ENCODE measurements at regions of chr1 and their contacts with region 1.

Region 1: DNA sequence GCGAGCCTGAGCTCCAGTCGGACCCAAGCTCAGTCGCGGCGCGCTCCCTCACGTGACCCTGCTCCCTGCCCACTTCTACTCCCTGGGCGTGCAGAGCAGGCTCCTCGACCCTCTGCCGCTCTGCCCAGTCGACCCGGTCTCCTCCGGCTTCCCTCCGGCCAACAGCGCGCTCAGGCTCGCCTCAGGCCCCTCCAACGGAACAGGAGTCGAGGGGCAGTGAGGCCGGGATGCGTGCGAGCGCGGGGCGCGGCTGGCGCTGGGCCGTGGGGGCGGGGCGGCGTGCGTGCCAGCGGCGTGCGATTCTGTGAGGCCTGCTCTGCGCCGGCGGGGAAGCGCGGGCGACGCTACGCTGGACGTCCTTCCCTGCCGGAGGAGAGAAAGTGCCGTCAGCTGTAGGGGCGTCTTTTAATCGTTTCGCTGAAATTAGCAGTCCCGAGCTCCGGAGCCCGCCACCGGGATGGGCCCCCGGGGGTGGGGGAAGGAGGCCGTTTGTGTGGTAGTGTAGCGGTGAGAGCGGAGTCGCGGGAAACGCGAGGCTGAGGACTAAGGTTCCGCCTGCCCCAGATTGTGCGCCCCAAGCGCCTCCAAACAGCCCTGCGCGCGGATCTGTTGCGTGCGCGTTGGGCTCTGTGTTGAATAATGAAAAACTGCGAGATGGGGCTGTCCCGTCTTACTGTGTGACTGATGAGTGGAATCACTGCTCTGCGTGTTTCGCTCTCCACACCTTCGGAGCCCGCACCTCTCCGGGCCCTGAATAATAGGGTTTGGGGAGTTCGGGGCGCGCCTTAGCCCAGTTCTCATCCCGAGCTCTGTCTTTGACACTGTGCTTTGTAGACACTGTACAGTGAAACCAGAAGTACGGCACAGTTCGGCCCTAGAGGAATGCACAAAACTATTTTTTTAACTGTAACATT is at the start of gene ACBD6:
- DNase-seq: peak; percentile 89
- H3K4me3 Mint-ChIP-seq: peak within 1 kb of the TSS; percentile 93
- H3K27ac Mint-ChIP-seq: peak within 1 kb of the TSS; percentile 96
- H3K4me1 Mint-ChIP-seq: peaks cover 38% of the 10 kb centered on the region
- H3K27me3 Mint-ChIP-seq: no peaks in the 10 kb centered on the region

Region 2: GRCh38 chr1:180462102-180462501 is 40.5 kb before region 1 on chr1:
- CTCF ChIA-PET with region 1: no interaction called
- DNase-seq: no peak
- H3K4me3 Mint-ChIP-seq: no peak overlapping the region
- H3K27ac Mint-ChIP-seq: no peak overlapping the region
- H3K4me1 Mint-ChIP-seq: peaks cover 3% of the 10 kb centered on the region
- H3K27me3 Mint-ChIP-seq: no peaks in the 10 kb centered on the region

Region 3: DNA sequence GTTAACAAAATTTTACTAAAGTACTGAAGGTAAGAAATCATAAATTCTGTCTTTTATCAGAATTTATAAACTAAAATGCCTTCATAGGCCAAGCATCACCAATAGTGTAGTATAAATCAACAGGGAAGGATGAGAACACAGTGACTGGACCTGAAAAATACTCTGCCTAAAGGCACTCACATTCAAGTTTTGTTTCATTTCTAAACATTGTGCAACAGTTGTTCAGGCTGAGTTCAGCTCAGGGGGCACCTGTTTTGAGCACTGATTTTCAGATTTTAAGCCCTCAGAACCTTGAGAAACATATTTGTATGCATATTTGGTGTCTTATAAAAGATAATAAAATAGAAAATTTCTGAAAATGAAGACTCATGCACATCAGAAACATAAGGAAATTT is 12.6 kb before region 1 on chr1:
- CTCF ChIA-PET with region 1: no interaction called
- DNase-seq: no peak
- H3K4me3 Mint-ChIP-seq: no peak overlapping the region
- H3K27ac Mint-ChIP-seq: no peak overlapping the region
- H3K4me1 Mint-ChIP-seq: peaks cover 4% of the 10 kb centered on the region
- H3K27me3 Mint-ChIP-seq: no peaks in the 10 kb centered on the region

Region 4: DNA sequence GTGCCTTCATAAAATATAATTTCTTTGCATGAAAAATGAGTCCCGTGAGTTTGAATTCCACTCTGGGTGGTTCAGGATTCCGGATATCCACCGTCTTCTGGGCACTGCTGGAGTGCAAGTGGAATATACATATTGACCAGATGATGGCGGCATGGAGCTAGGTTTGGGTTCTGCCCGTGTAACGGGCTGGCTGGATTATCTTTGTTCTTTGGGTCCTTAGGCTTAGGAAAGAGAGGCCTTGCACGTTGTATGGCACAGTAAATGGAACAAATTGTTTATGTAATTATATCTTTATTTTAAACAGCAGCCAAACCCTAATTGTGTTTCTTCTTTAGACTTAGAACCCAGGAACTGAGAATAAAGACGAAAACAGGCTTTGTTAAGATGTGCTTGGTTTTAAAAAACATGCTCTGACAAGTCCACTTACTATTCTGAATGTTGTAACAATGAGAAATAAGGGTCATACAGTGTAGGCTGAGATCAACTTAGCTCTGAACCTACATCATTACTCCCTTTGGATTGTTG is 13.3 kb after region 1 on chr1:
- CTCF ChIA-PET with region 1: interaction called, 11 read pairs
- DNase-seq: peak; percentile 68
- H3K4me3 Mint-ChIP-seq: no peak overlapping the region
- H3K27ac Mint-ChIP-seq: no peak overlapping the region
- H3K4me1 Mint-ChIP-seq: peaks cover 3% of the 10 kb centered on the region
- H3K27me3 Mint-ChIP-seq: peaks cover 17% of the 10 kb centered on the region

Region 5: GRCh38 chr1:180691301-180691913 is 188.8 kb after region 1 on chr1:
- CTCF ChIA-PET with region 1: no interaction called
- DNase-seq: no peak
- H3K4me3 Mint-ChIP-seq: no peak overlapping the region
- H3K27ac Mint-ChIP-seq: no peak overlapping the region
- H3K4me1 Mint-ChIP-seq: peaks cover 5% of the 10 kb centered on the region
- H3K27me3 Mint-ChIP-seq: no peaks in the 10 kb centered on the region